CD4-positive, alpha-beta memory T cell (primary cell): ENCODE measurements at regions of chr3 and their contacts with region 1.

Region 1: DNA sequence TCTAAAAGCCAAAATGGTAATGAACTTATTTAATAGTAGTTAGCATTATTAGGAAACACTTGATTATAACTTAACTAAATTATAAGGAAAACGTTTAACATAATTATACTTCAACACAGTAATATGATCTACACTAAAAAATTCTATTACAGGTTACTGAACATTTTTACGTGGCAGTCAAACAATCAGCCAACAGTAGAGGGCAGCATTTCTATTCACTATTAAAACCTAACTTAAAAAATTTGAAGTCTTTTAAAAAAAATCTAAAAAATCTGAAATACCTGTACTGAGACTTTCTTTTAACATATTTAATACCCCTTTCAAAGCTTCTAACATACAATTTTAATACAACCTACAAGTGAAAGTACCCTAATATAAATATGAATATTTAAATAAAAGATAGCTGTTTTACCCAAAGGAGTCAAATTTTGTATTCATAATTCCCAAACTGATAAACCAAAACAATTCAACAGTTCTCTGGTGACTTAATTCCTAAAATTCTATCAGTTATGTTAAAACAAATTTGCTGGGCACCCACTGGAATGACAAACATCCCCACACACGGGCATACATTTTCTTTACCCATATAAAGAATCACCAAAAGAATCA is 41.5 kb downstream of the DLG1 start:
- DNase-seq: peak in 4 of 5 donors; percentile 37 to 48 (median 42)
- H3K4me3 ChIP-seq: no peak overlapping the region
- H3K4me3 Mint-ChIP-seq: no peak overlapping the region
- H3K27ac ChIP-seq: no peak overlapping the region
- H3K27ac Mint-ChIP-seq: peak overlapping the region in 1 of 7 donors; percentile 42
- H3K4me1 ChIP-seq: peaks cover 41% of the 10 kb centered on the region
- H3K4me1 Mint-ChIP-seq: peaks cover 36 to 65% (median 55%) of the 10 kb centered on the region in 4 donors
- H3K27me3 ChIP-seq: no peaks in the 10 kb centered on the region
- H3K27me3 Mint-ChIP-seq: no peaks in the 10 kb centered on the region

Region 2: DNA sequence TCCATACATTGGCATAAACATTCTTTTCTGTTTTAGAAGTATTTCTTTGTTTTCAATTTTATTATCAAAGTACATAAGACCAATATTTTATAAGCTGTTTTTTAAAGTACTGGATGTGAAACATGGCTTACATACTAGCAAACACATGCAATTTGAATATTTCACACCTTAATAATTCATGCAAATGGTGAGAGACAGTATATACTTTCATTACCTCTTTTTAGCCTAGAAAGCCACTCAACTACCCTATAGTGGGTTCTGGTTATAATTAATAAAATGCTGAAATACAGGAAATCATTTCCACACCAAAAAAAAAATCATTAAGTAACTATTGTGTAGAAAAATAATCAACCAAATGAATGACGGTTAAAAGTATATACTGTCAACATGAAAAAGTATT is 188.9 kb before region 1 on chr3:
- CTCF ChIA-PET with region 1: no interaction called
- POLR2A ChIA-PET with region 1: no interaction called
- intact Hi-C with region 1: no loop called
- DNase-seq: no peak
- H3K4me3 ChIP-seq: no peak overlapping the region
- H3K4me3 Mint-ChIP-seq: no peak overlapping the region
- H3K27ac ChIP-seq: no peak overlapping the region
- H3K27ac Mint-ChIP-seq: no peak overlapping the region
- H3K4me1 ChIP-seq: no peaks in the 10 kb centered on the region
- H3K4me1 Mint-ChIP-seq: no peaks in the 10 kb centered on the region
- H3K27me3 ChIP-seq: no peaks in the 10 kb centered on the region
- H3K27me3 Mint-ChIP-seq: no peaks in the 10 kb centered on the region

Region 3: DNA sequence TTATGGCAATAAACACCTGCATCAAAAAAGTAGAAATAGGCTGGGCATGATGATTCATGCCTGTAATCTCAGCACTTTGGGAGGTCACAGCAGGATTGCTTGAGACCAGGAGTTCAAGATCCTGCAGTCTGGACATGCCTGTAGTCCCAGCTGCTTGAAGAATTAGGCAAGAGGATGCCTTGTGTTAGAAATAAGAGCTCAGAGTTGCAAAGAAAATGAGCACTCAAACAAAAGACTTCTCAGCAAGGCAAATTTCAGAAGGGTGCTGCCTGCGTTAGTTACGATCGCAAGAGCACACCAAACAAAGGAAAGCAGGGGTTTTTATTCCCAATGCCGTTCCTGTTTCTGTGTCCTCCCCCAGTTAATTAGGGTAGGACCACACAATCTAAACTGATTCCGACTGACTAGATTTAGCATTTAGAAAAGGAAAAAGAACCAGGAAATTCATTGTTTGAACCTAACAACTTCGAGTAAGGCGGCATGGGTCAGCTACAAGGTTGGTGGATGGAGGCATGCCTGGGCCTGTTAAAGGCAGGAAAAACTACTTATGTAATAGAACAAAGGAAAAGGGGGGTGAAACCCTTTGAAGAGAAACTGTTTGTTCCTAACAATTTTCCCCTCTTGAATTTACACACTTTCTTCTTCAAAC is 14.0 kb before region 1 on chr3:
- CTCF ChIA-PET with region 1: interaction called, 19 read pairs
- POLR2A ChIA-PET with region 1: no interaction called
- intact Hi-C with region 1: no loop called
- DNase-seq: no peak
- H3K4me3 ChIP-seq: no peak overlapping the region
- H3K4me3 Mint-ChIP-seq: peak overlapping the region in 1 of 8 donors; percentile 24
- H3K27ac ChIP-seq: no peak overlapping the region
- H3K27ac Mint-ChIP-seq: no peak overlapping the region
- H3K4me1 ChIP-seq: peaks cover 5% of the 10 kb centered on the region
- H3K4me1 Mint-ChIP-seq: peaks cover 29 to 47% (median 40%) of the 10 kb centered on the region in 4 donors
- H3K27me3 ChIP-seq: no peaks in the 10 kb centered on the region
- H3K27me3 Mint-ChIP-seq: no peaks in the 10 kb centered on the region

Region 4: DNA sequence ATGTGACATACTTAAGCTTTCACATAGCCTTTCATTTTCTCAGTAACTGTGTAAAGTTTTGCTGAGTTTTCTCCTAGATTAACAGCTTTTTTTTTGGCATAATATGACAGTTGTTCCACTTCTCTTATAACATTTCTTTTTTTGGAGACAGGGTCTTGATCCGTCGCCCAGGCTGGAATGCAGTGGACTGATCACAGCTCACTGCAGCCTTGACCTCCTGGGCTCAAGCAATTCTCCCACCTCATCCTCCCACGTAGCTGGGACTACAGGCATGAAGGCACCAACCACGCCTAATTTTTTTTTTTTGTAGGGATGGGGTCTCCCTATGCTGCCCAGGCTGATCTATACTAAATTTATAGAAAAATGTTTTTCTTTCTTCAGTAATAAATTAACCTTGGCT is 11.4 kb after region 1 on chr3:
- CTCF ChIA-PET with region 1: interaction called, 21 read pairs
- POLR2A ChIA-PET with region 1: no interaction called
- intact Hi-C with region 1: no loop called
- DNase-seq: no peak
- H3K4me3 ChIP-seq: no peak overlapping the region
- H3K4me3 Mint-ChIP-seq: no peak overlapping the region
- H3K27ac ChIP-seq: no peak overlapping the region
- H3K27ac Mint-ChIP-seq: peak overlapping the region in 1 of 7 donors; percentile 27
- H3K4me1 ChIP-seq: peaks cover 24% of the 10 kb centered on the region
- H3K4me1 Mint-ChIP-seq: peaks cover 37 to 60% (median 46%) of the 10 kb centered on the region in 4 donors
- H3K27me3 ChIP-seq: no peaks in the 10 kb centered on the region
- H3K27me3 Mint-ChIP-seq: no peaks in the 10 kb centered on the region

Region 5: DNA sequence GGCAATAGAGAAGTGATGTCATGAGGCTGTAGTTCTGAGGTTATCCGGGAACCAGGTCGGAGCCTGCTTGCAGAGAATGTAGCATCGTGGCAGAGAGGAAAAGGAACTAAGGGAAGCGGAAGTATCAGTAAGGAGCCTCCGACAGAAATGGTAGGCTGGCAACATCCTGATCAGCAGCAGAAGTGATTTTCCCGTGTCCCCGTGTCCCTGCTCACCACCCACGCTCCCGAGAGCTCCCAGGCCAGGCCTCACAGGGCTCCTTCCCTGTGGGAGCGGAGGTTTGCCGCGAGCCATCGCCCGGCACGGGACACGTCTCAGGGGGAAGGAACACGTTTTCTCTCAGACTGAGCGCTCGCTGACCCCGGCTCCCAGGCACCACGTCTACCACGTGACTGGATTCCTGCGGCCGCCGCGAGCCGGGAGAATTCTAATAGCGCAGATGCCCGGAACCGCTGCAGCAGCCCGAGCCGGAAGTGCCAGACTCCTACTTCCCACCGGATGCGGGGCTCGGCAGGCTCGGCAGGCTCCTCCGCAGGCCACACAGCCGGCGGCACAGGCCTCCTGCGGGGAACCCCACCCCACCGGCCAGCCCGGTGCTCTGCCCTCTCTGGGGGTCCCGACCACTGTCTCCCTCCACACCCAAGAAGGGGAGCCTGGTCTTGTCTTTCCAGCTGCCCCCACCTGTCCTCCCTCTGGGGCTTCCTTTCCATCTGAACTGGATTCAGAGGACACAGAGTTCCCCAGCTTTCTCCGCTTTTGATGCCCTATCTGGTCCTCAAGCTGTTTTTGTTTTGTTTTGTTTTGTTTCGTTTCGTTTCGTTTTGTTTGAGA is 199.5 kb after region 1 on chr3:
- CTCF ChIA-PET with region 1: interaction called, 6 read pairs
- POLR2A ChIA-PET with region 1: no interaction called
- intact Hi-C with region 1: loop called (anchors 1 kb)
- DNase-seq: peak in 2 of 5 donors; percentile 15 to 39
- H3K4me3 ChIP-seq: peak overlapping the region; percentile 70 to 78
- H3K4me3 Mint-ChIP-seq: peak overlapping the region; percentile 91 to 97 (median 94)
- H3K27ac ChIP-seq: peak overlapping the region; percentile 32
- H3K27ac Mint-ChIP-seq: peak overlapping the region; percentile 41 to 94 (median 87)
- H3K4me1 ChIP-seq: peaks cover 16% of the 10 kb centered on the region
- H3K4me1 Mint-ChIP-seq: peaks cover 10 to 27% (median 17%) of the 10 kb centered on the region in 4 donors
- H3K27me3 ChIP-seq: no peaks in the 10 kb centered on the region
- H3K27me3 Mint-ChIP-seq: peaks cover 0 to 1% of the 10 kb centered on the region in 2 donors

Region 6: GRCh38 chr3:197511130-197511529 is 254.2 kb after region 1 on chr3:
- CTCF ChIA-PET with region 1: interaction called, 69 read pairs
- POLR2A ChIA-PET with region 1: no interaction called
- intact Hi-C with region 1: loop called (anchors 1 kb)
- DNase-seq: no peak
- H3K4me3 ChIP-seq: no peak overlapping the region
- H3K4me3 Mint-ChIP-seq: no peak overlapping the region
- H3K27ac ChIP-seq: no peak overlapping the region
- H3K27ac Mint-ChIP-seq: no peak overlapping the region
- H3K4me1 ChIP-seq: peaks cover 8% of the 10 kb centered on the region
- H3K4me1 Mint-ChIP-seq: peaks cover 0 to 9% (median 3%) of the 10 kb centered on the region in 4 donors
- H3K27me3 ChIP-seq: no peaks in the 10 kb centered on the region
- H3K27me3 Mint-ChIP-seq: no peaks in the 10 kb centered on the region